ENCODE measurements at regions of chr7 and their contacts with region 1.

Region 1: DNA sequence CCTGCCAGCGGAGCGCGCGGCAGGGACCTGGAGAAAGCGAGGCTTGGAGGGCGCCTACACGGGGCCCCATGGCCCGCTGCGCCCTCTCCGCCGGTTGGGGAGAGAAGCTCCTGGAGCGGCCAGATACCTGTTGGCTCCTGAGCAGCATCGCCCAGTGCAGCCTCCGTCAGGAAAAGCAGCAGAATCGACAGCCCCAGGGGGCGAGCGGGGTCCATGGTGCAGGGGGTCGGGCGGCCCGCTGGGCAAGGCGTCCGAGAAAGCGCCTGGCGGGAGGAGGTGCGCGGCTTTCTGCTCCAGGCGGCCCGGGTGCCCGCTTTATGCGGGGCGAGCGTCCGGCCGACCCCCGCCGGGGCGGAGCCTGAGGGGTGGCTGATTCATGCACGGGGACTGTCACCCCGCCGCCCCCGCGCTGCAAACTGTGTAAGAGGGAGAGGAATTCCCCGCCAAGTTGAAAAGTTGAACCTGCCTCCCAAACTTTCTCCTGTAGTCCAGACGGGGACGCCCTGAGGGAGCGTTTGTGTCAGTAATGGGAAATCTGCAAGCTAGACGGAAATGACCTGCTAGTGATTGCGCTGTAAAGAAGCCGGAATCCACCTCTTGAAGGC is at the start of gene TFPI2:
- DNase-seq: peak; percentile 87
- ATAC-seq: peak; percentile 73
- H3K4me3 ChIP-seq: peak within 1 kb of the TSS; percentile 83
- H3K27ac ChIP-seq: peak within 1 kb of the TSS; percentile 90
- H3K4me1 ChIP-seq: peaks cover 15% of the 10 kb centered on the region
- H3K27me3 ChIP-seq: no peaks in the 10 kb centered on the region
- CTCF ChIP-seq: peak; percentile 38; the same call in 1 of the 2 replicates
- total RNA-seq, gene TFPI2: 53.1 and 62.6 TPM in 2 replicates

Region 2: GRCh38 chr7:93799750-93800357 is 90.7 kb before region 1 on chr7:
- CTCF ChIA-PET with region 1: no interaction called
- POLR2A ChIA-PET with region 1: no interaction called
- intact Hi-C with region 1: loop called (anchors 2 kb)
- DNase-seq: peak; percentile 51
- ATAC-seq: peak; percentile 38; the same call in 1 of the 2 replicates
- H3K4me3 ChIP-seq: no peak overlapping the region
- H3K27ac ChIP-seq: no peak overlapping the region
- H3K4me1 ChIP-seq: no peaks in the 10 kb centered on the region
- H3K27me3 ChIP-seq: peaks cover 12% of the 10 kb centered on the region; the same call in 1 of the 2 replicates
- CTCF ChIP-seq: peak; percentile 71

Region 3: DNA sequence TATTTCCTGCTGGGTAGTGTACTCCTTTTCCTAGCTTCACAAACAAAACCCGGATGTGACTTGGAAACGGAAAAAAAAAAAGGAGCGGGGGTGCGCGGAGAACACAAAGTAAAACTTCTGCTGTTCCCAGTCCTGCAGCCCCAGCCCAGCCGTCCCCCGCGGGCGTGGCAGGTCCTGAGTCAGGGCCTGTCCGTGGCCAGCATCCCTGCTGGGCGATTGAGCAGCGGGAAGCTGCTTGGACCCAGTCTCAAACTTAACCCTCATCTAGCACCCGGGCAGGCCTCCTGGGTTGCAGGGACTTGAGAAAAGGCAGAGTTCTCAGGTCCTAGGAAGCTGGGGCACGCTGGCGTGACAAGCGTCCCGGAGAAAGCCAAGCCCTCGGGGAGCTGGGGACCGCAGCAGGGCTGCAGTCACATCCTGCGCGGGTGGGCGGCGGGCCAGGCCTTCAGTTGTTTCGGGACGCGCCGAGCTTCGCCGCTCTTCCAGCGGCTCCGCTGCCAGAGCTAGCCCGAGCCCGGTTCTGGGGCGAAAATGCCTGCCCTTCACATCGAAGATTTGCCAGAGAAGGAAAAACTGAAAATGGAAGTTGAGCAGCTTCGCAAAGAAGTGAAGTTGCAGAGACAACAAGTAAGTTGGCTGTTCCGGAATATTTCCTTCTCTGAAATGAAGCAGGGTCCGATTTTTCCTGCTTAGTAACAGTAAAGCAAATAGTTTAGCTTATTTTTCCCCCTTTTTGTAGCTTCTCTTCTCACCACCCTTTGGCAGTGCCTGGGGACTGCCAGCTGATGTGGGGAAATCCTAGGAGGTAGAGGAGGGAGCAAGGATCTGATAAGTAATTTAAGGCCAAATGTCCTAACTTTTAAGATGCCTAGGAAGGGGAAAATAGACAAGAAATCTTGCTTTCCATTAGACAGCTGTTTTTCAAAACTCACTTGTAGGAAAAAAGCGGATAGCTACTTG is 31.3 kb after region 1 on chr7 and contains the start of gene GNG11:
- CTCF ChIA-PET with region 1: no interaction called
- POLR2A ChIA-PET with region 1: interaction called, 3 read pairs
- intact Hi-C with region 1: loop called (anchors 2 kb)
- DNase-seq: peak; percentile 65
- ATAC-seq: peak; percentile 87
- H3K4me3 ChIP-seq: peak within 1 kb of the TSS; percentile 73
- H3K27ac ChIP-seq: peak within 1 kb of the TSS; percentile 68
- H3K4me1 ChIP-seq: no peaks in the 10 kb centered on the region
- H3K27me3 ChIP-seq: no peaks in the 10 kb centered on the region
- CTCF ChIP-seq: no peak
- total RNA-seq, gene GNG11: 3.0 and 4.4 TPM in 2 replicates

Region 4: GRCh38 chr7:94087664-94088352 is 197.2 kb after region 1 on chr7:
- CTCF ChIA-PET with region 1: interaction called, 9 read pairs
- POLR2A ChIA-PET with region 1: no interaction called
- intact Hi-C with region 1: loop called (anchors 1 kb)
- DNase-seq: peak; percentile 81
- ATAC-seq: peak; percentile 93
- H3K4me3 ChIP-seq: peak overlapping the region; percentile 45
- H3K27ac ChIP-seq: no peak overlapping the region
- H3K4me1 ChIP-seq: no peaks in the 10 kb centered on the region
- H3K27me3 ChIP-seq: peaks cover 31% of the 10 kb centered on the region
- CTCF ChIP-seq: peak; percentile 88

Region 5: DNA sequence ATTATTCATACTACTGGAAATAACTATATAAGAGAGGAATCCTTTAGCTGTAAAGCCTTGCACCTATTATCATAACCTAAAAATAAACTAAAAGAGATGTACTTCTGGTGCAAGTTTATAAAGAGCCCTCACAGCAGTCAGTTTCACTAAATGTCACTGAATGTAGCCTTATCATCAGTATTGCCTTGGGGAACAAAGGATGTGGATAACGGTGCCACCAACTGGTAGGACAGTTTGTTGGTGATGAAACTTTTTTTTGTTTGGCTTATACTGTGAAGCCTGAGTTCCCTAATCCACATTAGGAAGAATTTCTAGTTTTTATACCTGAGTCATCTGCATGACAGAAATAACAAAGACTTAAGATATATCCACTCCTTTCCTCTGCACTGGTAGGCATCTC is 386.2 kb after region 1 on chr7:
- CTCF ChIA-PET with region 1: no interaction called
- POLR2A ChIA-PET with region 1: no interaction called
- intact Hi-C with region 1: loop called (anchors 2 kb)
- DNase-seq: peak; percentile 59
- ATAC-seq: peak; percentile 95
- H3K4me3 ChIP-seq: no peak overlapping the region
- H3K27ac ChIP-seq: no peak overlapping the region
- H3K4me1 ChIP-seq: no peaks in the 10 kb centered on the region
- H3K27me3 ChIP-seq: peaks cover 31% of the 10 kb centered on the region; the same call in 1 of the 2 replicates
- CTCF ChIP-seq: peak; percentile 67